ENCODE measurements at regions of chr15 and their contacts with region 1.

Region 1: GRCh38 chr15:57667171-57667849 is 39.2 kb upstream of the POLR2M start:
- DNase-seq: no peak
- ATAC-seq: peak; percentile 45 to 68 (median 56)
- H3K4me3 ChIP-seq: no peak overlapping the region
- H3K27ac ChIP-seq: peak overlapping the region in 4 of 12 donors; percentile 20 to 53 (median 31)
- H3K4me1 ChIP-seq: peaks cover 0 to 37% (median 13%) of the 10 kb centered on the region in 12 donors
- H3K27me3 ChIP-seq: no peaks in the 10 kb centered on the region
- CTCF ChIP-seq: peak; percentile 8 to 66 (median 48)
- POLR2A ChIP-seq: no peak

Region 2: DNA sequence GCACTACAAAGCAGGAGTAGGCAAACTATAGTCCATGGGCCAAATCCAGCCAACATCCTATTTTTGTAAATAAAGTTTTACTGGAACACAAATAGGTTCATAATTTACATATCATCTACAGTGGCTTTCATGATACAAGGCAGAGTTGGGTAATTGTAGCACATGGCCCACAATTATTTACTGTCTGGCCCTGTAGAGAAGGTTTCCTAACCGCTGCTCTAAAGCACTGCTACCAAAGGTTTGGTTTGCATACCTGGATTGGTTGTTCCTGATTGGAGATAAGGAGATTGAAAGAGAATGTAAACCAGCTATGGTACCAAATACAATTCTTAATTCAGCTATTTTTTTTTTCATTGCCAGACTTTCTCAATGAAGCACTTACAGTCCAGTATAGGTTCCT is 1038.2 kb before region 1 on chr15:
- intact Hi-C with region 1: no loop called
- DNase-seq: no peak
- ATAC-seq: no peak
- H3K4me3 ChIP-seq: no peak overlapping the region
- H3K27ac ChIP-seq: no peak overlapping the region
- H3K4me1 ChIP-seq: no peaks in the 10 kb centered on the region
- H3K27me3 ChIP-seq: no peaks in the 10 kb centered on the region
- CTCF ChIP-seq: no peak
- POLR2A ChIP-seq: no peak

Region 3: DNA sequence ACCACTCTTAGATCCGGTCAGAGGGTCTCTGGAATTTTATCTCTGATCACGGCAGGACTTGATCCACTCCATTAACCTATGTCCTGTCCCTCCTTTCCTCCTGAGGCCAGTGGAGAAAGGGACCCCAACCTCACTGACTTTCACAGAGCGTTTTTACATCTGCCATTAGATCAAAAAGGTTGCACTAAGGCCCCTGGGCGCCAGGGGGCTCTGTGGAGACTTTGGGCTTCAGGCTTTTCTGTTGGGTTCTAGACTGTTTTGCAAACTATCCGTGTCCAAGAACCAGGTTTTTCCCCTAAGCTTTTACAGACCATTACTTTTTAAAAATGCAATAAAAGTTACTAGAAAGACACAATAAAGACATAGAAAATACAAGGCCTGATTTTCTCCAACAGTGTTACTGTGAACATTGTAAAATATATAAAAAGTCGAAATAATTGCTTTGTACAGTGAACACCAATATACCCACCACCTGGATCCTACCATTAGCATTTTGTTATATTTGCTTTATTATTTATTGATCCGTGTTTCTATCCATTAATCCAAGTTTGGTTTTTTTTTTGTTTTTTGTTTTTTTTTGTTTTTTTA is 198.9 kb after region 1 on chr15:
- intact Hi-C with region 1: loop called in 9 of 10 experiments (anchors 1 to 10 kb)
- DNase-seq: peak; percentile 28 to 67 (median 52)
- ATAC-seq: peak in 2 of 4 donors; percentile 54 to 62
- H3K4me3 ChIP-seq: no peak overlapping the region
- H3K27ac ChIP-seq: no peak overlapping the region
- H3K4me1 ChIP-seq: peaks cover 0 to under 1% (median 0%) of the 10 kb centered on the region in 12 donors
- H3K27me3 ChIP-seq: peaks cover 0 to 6% (median 0%) of the 10 kb centered on the region in 9 donors
- CTCF ChIP-seq: peak; percentile 64 to 85 (median 80)
- POLR2A ChIP-seq: no peak